ENCODE measurements at regions of chr9 and their contacts with region 1.

Region 1: DNA sequence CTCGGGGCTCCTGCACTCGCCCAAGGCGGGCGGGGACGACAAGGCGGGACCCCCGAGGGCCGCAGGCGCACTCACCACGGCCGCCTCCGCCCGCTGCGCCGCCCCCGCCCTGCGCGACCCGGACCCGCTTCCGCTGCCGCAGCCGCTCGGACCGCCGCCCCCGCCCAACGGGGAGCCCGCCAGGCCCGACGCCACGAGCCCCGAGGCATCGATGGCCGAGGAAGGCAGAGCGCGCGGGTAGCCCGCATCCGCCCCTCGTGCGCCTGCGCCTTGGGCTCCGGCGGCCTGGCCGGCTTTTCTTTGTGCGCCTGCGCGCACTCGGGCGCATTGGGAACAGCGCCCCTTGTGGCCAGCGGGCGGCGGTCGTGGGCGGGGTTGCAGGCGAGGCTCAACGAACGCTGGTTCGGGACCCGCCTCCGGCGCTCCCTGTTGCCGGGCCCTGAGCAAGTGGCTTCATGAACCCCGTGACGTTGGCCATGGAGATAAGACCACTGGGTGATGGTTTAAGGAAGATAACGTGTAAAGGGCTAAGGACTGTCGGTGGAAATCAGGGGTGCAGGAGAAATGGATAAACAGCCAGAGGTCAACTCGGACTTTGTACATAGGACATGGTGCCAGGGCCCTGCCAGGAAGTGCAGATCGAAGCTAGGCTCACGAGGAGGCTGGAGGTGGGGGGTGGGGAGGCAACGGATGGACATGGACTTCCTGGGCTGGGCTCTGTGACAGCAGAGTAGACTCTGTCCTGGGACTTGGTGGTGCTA is at the starts of genes C8G and FBXW5:
- DNase-seq: peak; percentile 96 to 99 (median 98)
- ATAC-seq: peak; percentile 64 to 75
- H3K4me3 ChIP-seq: peak within 1 kb of the TSS; percentile 75
- H3K27ac ChIP-seq: peak within 1 kb of the TSS; percentile 93
- H3K4me1 ChIP-seq: no peaks in the 10 kb centered on the region
- H3K27me3 ChIP-seq: no peaks in the 10 kb centered on the region
- total RNA-seq, gene C8G: 1.0 to 1.8 (median 1.4) TPM
- total RNA-seq, gene FBXW5: 108 to 139 (median 120) TPM

Region 2: GRCh38 chr9:136849038-136849959 is 95.4 kb before region 1 on chr9 and contains the start of gene PHPT1:
- intact Hi-C with region 1: loop called in 3 of 4 experiments (anchors 5 to 10 kb)
- DNase-seq: peak; percentile 99 to 100 (median 99)
- ATAC-seq: peak; percentile 89
- H3K4me3 ChIP-seq: peak within 1 kb of the TSS; percentile 70
- H3K27ac ChIP-seq: peak within 1 kb of the TSS; percentile 93
- H3K4me1 ChIP-seq: peaks cover 2% of the 10 kb centered on the region
- H3K27me3 ChIP-seq: no peaks in the 10 kb centered on the region
- total RNA-seq, gene PHPT1: 176 to 227 (median 203) TPM

Region 3: DNA sequence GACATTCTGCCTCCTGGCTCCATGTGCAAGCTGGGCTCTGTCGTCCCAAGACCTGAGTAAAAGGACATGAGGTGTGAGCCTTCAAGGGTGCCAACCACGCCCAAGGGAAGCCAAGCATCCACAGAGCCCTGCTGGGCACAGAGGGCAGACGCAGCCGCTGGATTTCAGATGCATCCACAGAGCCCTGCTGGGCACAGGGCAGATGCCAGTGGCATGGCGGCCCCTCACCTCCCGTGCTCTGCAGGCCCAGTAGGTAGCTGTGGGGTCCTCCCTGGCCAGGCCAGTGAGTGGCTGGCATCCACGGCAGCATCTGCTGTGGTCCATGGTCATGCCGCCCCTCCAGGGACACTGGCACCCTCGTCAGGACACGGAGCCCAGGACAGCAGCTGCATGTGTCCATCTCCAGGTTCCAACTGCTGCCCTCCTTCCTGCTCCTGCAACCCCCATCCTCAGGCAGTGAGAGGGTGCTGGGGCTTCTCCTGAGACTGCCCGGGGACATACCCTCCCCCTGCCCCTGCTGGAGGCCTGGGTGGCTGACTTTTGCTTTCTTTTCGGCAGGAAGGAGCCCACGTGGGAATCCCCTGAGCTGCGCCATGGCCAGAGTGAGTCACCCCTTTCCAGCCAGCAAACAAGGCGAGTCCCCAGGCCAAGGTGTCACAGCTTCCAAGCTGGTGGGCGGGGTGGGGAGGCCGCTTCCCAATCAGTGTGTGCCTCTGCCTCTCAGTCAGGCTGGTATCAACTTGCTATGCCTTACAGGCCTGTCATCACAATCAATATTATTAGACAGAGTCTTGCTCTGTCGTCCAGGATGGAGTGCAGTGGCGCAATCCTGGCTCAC is 62.4 kb before region 1 on chr9:
- intact Hi-C with region 1: loop called in 1 of 4 experiments (anchors 5 kb)
- DNase-seq: peak; percentile 66 to 80 (median 79)
- ATAC-seq: peak in 1 of 2 donors; percentile 44
- H3K4me3 ChIP-seq: no peak overlapping the region
- H3K27ac ChIP-seq: no peak overlapping the region
- H3K4me1 ChIP-seq: no peaks in the 10 kb centered on the region
- H3K27me3 ChIP-seq: no peaks in the 10 kb centered on the region

Region 4: DNA sequence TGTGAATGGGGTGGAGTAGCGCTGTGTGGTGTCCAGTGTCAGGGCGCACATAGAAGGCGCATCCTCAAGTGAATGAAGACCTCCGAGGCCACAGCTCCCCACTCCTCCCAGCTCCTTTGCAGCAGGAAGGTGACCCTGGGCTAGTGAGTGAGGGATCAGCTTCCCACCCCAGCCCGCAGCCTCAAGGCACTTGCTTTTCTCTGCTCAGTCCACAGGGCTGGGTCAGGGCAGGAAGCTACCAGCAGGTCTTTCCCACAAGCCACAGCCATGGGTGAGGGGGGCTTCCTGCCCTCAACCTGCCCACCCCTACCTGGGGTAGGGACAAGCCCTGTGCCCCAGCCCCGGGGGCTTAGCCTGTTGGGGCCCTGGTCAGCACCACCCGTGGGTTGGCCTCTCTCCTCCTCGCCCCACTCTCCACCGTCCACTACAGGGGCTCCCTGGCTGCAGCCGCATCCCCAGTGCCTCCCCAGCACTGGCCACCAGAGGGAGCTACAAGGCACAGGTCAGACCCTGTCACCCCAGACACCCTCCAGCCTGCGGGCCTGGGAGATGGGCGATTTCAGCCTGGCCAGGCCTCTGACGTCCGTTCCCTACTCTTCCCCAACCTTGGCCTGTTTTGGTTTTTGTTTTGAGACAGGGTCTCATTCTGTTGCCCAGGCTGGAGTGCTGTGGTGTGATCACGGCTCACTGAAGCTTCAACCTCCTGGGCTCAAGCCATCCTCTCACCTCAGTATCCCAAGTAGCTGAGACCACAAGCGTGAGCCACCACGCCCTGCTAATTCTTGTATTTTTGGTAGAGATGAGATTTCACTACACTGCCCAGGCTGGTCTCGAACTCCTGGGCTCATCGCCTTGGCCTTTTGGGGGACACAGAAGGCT is 84.6 kb after region 1 on chr9:
- intact Hi-C with region 1: loop called in 2 of 4 experiments (anchors 5 to 10 kb)
- DNase-seq: peak; percentile 82 to 94 (median 93)
- ATAC-seq: peak; percentile 63 to 73
- H3K4me3 ChIP-seq: no peak overlapping the region
- H3K27ac ChIP-seq: no peak overlapping the region
- H3K4me1 ChIP-seq: no peaks in the 10 kb centered on the region
- H3K27me3 ChIP-seq: no peaks in the 10 kb centered on the region

Region 5: DNA sequence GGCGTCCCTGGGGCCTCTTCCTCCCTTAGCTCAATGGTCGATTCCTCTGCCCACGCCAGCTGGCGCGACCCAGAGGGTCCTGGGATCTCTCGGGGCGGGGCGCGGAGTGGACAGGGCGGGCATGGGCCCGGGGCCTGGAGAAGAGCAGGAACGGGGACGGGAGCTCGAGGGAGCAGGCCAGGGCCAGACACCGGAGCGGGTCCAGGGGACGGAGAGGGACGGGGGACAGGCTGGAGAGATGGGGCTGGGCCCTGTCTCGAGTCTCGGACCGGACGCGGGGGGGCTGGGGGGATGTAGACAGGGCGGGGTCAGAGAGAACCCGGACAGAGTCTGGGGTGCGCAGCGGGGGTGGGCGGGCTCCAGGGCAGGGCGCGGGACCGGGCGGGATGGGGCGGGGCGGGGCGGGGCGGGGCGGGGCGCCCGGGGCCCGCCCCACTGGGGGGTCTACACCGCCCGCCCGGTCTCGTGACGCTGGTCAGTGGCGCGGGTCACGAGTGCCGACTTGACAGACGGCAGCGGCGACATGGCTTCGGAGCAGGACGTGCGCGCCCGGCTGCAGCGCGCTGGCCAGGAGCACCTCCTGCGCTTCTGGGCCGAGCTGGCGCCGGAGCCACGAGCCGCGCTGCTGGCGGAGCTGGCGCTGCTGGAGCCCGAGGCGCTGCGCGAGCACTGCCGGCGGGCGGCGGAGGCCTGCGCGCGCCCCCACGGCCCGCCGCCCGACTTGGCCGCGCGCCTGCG is 132.5 kb after region 1 on chr9 and contains the start of gene UAP1L1:
- intact Hi-C with region 1: no loop called
- DNase-seq: peak; percentile 75 to 94 (median 93)
- ATAC-seq: peak; percentile 67 to 77
- H3K4me3 ChIP-seq: peak within 1 kb of the TSS; percentile 74
- H3K27ac ChIP-seq: peak within 1 kb of the TSS; percentile 50
- H3K4me1 ChIP-seq: no peaks in the 10 kb centered on the region
- H3K27me3 ChIP-seq: no peaks in the 10 kb centered on the region
- total RNA-seq, gene UAP1L1: 9.8 to 14.0 (median 12.4) TPM

Measured in right cardiac atrium (tissue), 5 donors.